ENCODE measurements at regions of chr2 and their contacts with region 1.

Region 1: DNA sequence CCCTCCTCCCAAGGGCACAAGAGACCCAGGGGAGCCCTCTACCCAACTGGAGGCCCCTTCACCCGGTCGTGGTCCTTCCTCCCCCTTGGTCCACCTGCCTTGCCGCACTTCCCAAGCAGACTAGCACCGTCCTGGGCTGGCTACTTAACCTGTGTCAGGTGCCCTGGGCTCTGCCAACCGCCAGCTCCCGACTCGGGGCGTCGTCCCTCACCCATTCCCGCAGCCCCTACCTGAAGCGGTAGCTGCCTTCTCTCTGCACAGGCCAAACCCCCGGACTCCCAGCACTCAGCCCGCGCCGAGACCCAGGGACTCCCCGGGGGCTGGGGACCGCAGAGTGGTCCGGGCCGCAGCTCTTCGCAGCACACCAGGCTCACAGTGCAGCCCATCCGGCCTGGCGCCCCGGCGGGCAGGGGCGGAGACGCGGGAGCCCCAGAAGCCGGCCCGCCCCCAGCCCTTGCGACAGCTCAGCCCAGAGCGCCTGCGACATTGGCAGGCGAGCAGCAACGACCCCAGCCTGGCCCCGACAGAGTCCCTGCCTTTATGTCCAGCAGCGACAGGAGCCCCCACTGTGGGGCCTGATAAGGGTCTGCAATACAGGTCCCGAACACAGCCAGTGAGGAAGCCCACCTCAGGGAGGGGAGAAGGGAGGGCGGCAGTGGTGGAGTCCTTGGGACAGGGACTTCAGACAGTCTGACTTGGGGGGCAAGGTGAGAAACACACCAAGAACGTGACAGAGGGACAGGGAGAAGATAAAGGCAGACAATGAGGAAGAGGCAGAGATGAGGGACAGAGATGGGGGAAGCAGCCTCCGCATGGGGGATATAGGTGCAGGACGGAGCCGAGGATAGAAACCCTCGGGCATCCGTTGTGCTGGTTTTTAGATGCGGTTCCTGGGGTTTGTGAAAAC is 31.0 kb upstream of the TNS1 start:
- DNase-seq: peak in 2 of 3 donors; percentile 78 to 79
- ATAC-seq: peak; percentile 15 to 58
- H3K4me3 ChIP-seq: no peak overlapping the region
- H3K27ac ChIP-seq: no peak overlapping the region
- H3K4me1 ChIP-seq: peaks cover 5% of the 10 kb centered on the region
- H3K27me3 ChIP-seq: no peaks in the 10 kb centered on the region

Region 2: GRCh38 chr2:217993817-217994463 is 39.9 kb before region 1 on chr2:
- intact Hi-C with region 1: loop called in 2 of 4 experiments (anchors 5 to 10 kb)
- DNase-seq: peak; percentile 75 to 89 (median 89)
- ATAC-seq: peak; percentile 40 to 58
- H3K4me3 ChIP-seq: no peak overlapping the region
- H3K27ac ChIP-seq: no peak overlapping the region
- H3K4me1 ChIP-seq: no peaks in the 10 kb centered on the region
- H3K27me3 ChIP-seq: no peaks in the 10 kb centered on the region

Measured in right cardiac atrium (tissue), 5 donors.